ENCODE measurements at regions of chr12 and their contacts with region 1.

Region 1: GRCh38 chr12:25557830-25558436 is 4.8 kb upstream of the LMNTD1 start:
- DNase-seq: peak; percentile 15 to 36
- H3K4me3 ChIP-seq: no peak overlapping the region
- H3K27ac ChIP-seq: no peak overlapping the region
- H3K4me1 ChIP-seq: no peaks in the 10 kb centered on the region
- H3K27me3 ChIP-seq: no peaks in the 10 kb centered on the region
- CTCF ChIP-seq: peak; percentile 15 to 73 (median 59)
- POLR2A ChIP-seq: no peak

Region 2: GRCh38 chr12:25417071-25417470 is 140.9 kb before region 1 on chr12:
- intact Hi-C with region 1: no loop called
- DNase-seq: no peak
- H3K4me3 ChIP-seq: no peak overlapping the region
- H3K27ac ChIP-seq: no peak overlapping the region
- H3K4me1 ChIP-seq: peaks cover 0 to 3% of the 10 kb centered on the region in 2 donors
- H3K27me3 ChIP-seq: no peaks in the 10 kb centered on the region
- CTCF ChIP-seq: no peak
- POLR2A ChIP-seq: no peak

Region 3: GRCh38 chr12:25436203-25437030 is 121.5 kb before region 1 on chr12:
- intact Hi-C with region 1: loop called (anchors 5 kb)
- DNase-seq: peak; percentile 18 to 28
- H3K4me3 ChIP-seq: no peak overlapping the region
- H3K27ac ChIP-seq: no peak overlapping the region
- H3K4me1 ChIP-seq: peaks cover 16% of the 10 kb centered on the region in 2 donors
- H3K27me3 ChIP-seq: no peaks in the 10 kb centered on the region
- CTCF ChIP-seq: peak; percentile 51 to 84 (median 74)
- POLR2A ChIP-seq: no peak

Region 4: GRCh38 chr12:25447046-25447445 is 110.9 kb before region 1 on chr12:
- intact Hi-C with region 1: no loop called
- DNase-seq: no peak
- H3K4me3 ChIP-seq: no peak overlapping the region
- H3K27ac ChIP-seq: no peak overlapping the region
- H3K4me1 ChIP-seq: no peaks in the 10 kb centered on the region
- H3K27me3 ChIP-seq: no peaks in the 10 kb centered on the region
- CTCF ChIP-seq: no peak
- POLR2A ChIP-seq: no peak

Region 5: DNA sequence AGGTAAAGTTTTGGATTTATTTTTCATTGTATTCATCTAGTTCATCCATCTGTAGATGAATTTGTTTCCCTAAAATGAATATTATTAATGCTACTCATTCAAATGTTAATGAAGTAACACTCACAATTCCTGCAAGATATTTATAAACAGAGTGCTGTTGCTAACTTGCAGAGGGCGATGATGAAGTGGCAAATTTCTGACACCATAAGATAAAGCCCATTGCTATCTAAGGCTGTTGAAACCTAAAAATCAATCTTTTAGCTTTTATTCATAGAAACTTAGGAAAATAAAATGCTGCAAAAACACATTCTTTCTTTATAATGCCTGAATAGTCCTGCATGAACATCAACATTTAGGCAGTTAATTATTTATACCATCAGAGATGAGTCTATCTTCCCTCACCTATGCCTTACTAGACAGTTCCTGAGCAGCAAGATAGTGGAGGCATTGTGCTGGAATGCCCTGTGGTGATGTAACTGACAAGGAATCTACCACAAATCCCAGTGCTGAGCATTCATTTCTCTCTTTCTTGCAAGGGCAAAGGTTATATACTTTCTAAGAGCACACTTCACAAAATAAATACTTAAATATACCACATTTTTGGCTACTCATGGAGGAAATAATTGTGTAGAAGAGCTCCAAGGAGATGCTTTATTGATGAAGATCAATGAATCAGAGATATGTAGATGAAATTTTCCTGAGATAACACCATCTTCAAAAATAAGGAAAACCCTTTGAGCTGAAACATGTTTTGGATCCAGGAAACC is 62.4 kb before region 1 on chr12:
- intact Hi-C with region 1: no loop called
- DNase-seq: no peak
- H3K4me3 ChIP-seq: no peak overlapping the region
- H3K27ac ChIP-seq: no peak overlapping the region
- H3K4me1 ChIP-seq: no peaks in the 10 kb centered on the region
- H3K27me3 ChIP-seq: no peaks in the 10 kb centered on the region
- CTCF ChIP-seq: no peak
- POLR2A ChIP-seq: no peak

Measured in thyroid gland (tissue), 4 donors.